ENCODE measurements at regions of chr20 and their contacts with region 1.

Region 1: GRCh38 chr20:38926142-38926933 is at the start of gene FAM83D:
- H3K4me3 ChIP-seq: peak within 1 kb of the TSS; percentile 86
- H3K27ac ChIP-seq: peak within 1 kb of the TSS; percentile 66; the same call in 1 of the 2 replicates
- H3K4me1 ChIP-seq: peaks cover 4% of the 10 kb centered on the region; the same call in 1 of the 2 replicates
- CTCF ChIP-seq: no peak

Region 2: GRCh38 chr20:38962044-38962927 is 35.9 kb after region 1 on chr20 and contains the start of gene DHX35:
- CTCF ChIA-PET with region 1: interaction called, 5 read pairs
- POLR2A ChIA-PET with region 1: interaction called, 37 read pairs
- H3K4me3 ChIP-seq: peak within 1 kb of the TSS; percentile 99
- H3K27ac ChIP-seq: peak within 1 kb of the TSS; percentile 71
- H3K4me1 ChIP-seq: peaks cover 4% of the 10 kb centered on the region; the same call in 1 of the 2 replicates
- CTCF ChIP-seq: peak; percentile 82

Region 3: GRCh38 chr20:38979842-38980241 is 53.5 kb after region 1 on chr20:
- CTCF ChIA-PET with region 1: interaction called, 3 read pairs
- POLR2A ChIA-PET with region 1: interaction called, 10 read pairs
- H3K4me3 ChIP-seq: no peak overlapping the region
- H3K27ac ChIP-seq: no peak overlapping the region
- H3K4me1 ChIP-seq: no peaks in the 10 kb centered on the region
- CTCF ChIP-seq: no peak

Region 4: GRCh38 chr20:39029324-39029820 is 103.0 kb after region 1 on chr20:
- CTCF ChIA-PET with region 1: no interaction called
- POLR2A ChIA-PET with region 1: interaction called, 10 read pairs
- H3K4me3 ChIP-seq: no peak overlapping the region
- H3K27ac ChIP-seq: no peak overlapping the region
- H3K4me1 ChIP-seq: no peaks in the 10 kb centered on the region
- CTCF ChIP-seq: no peak

Measured in HEK293 (cell line).